Sigmoid colon (tissue), 7 donors: ENCODE measurements at regions of chr22 and their contacts with region 1.

Region 1: GRCh38 chr22:27107824-27108223 is 450.4 kb downstream of the MIAT start:
- DNase-seq: peak; percentile 88
- H3K4me3 ChIP-seq: no peak overlapping the region
- H3K27ac ChIP-seq: peak overlapping the region; percentile 74 to 84 (median 78)
- H3K4me1 ChIP-seq: peaks cover 0 to 67% (median 54%) of the 10 kb centered on the region in 4 donors
- H3K27me3 ChIP-seq: no peaks in the 10 kb centered on the region
- CTCF ChIP-seq: no peak
- EP300 ChIP-seq: no peak
- POLR2A ChIP-seq: no peak

Region 2: GRCh38 chr22:26763633-26764361 is 344.0 kb before region 1 on chr22:
- intact Hi-C with region 1: no loop called
- DNase-seq: no peak
- H3K4me3 ChIP-seq: no peak overlapping the region
- H3K27ac ChIP-seq: peak overlapping the region in 1 of 4 donors; percentile 19
- H3K4me1 ChIP-seq: peaks cover 0 to 8% (median 3%) of the 10 kb centered on the region in 4 donors
- H3K27me3 ChIP-seq: no peaks in the 10 kb centered on the region
- CTCF ChIP-seq: no peak
- EP300 ChIP-seq: no peak
- POLR2A ChIP-seq: no peak

Region 3: DNA sequence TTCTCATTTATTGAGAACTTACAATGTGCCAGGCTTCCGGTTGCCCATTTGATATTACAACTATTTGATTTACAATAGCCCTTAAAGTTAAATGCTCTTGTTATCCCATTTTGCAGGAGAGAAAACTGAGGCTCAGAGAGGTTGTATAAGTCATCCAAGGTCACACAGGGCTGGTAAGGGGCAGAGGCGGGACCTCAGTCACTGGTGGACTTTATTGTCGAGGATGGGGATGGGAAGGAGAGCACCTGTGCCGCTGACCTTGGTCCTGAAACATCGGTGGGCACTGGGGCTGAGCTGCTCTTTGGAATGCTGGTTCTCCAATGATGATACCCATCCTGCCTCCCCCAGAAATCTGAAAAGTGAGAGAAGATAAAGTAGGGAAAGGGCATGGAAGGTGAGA is 185.0 kb before region 1 on chr22:
- intact Hi-C with region 1: no loop called
- DNase-seq: no peak
- H3K4me3 ChIP-seq: no peak overlapping the region
- H3K27ac ChIP-seq: no peak overlapping the region
- H3K4me1 ChIP-seq: no peaks in the 10 kb centered on the region
- H3K27me3 ChIP-seq: no peaks in the 10 kb centered on the region
- CTCF ChIP-seq: no peak
- EP300 ChIP-seq: no peak
- POLR2A ChIP-seq: no peak

Region 4: GRCh38 chr22:26981541-26981940 is 126.3 kb before region 1 on chr22:
- intact Hi-C with region 1: loop called (anchors 5 kb)
- DNase-seq: peak; percentile 92
- H3K4me3 ChIP-seq: no peak overlapping the region
- H3K27ac ChIP-seq: peak overlapping the region; percentile 41 to 82 (median 76)
- H3K4me1 ChIP-seq: peaks cover 0 to 38% (median 25%) of the 10 kb centered on the region in 4 donors
- H3K27me3 ChIP-seq: no peaks in the 10 kb centered on the region
- CTCF ChIP-seq: no peak
- EP300 ChIP-seq: peak; percentile 37 to 88 (median 62)
- POLR2A ChIP-seq: no peak

Region 5: GRCh38 chr22:26995235-26995634 is 112.6 kb before region 1 on chr22:
- intact Hi-C with region 1: loop called (anchors 2 kb)
- DNase-seq: peak; percentile 84
- H3K4me3 ChIP-seq: no peak overlapping the region
- H3K27ac ChIP-seq: peak overlapping the region in 2 of 4 donors; percentile 8 to 26
- H3K4me1 ChIP-seq: peaks cover 0 to 31% (median 23%) of the 10 kb centered on the region in 4 donors
- H3K27me3 ChIP-seq: no peaks in the 10 kb centered on the region
- CTCF ChIP-seq: no peak
- EP300 ChIP-seq: no peak
- POLR2A ChIP-seq: no peak

Region 6: GRCh38 chr22:27195094-27195493 is 87.3 kb after region 1 on chr22:
- intact Hi-C with region 1: no loop called
- DNase-seq: peak; percentile 88
- H3K4me3 ChIP-seq: no peak overlapping the region
- H3K27ac ChIP-seq: peak overlapping the region; percentile 40 to 67 (median 64)
- H3K4me1 ChIP-seq: peaks cover 0 to 12% (median 9%) of the 10 kb centered on the region in 4 donors
- H3K27me3 ChIP-seq: no peaks in the 10 kb centered on the region
- CTCF ChIP-seq: no peak
- EP300 ChIP-seq: no peak
- POLR2A ChIP-seq: no peak

Region 7: DNA sequence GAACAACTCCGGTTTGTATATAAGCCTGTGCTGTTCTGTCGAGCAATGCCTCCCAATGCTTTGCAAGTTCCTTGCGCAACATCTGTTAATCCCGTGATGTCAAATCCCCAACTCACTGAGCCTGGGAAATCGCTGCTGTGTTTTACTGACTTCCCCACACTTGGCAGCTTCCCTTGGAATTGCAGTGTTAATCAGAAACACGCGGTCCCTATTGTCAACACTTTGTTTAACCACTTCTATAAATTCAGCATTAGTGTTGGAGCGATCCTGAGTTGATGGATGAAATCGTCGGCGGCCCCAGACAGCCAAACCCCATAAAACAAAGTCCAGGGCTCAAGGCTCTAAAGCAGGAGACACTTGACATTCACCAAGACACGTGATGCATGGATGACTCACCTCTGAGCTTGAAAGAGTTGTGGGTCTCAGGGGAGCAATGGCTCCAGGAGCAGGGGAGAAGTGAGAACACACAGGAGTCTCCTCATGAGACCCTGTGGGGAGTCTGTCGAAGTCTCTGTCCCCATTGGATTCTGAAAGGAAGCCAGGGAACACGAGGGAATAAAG is 104.9 kb after region 1 on chr22:
- intact Hi-C with region 1: loop called (anchors 2 kb)
- DNase-seq: peak; percentile 97
- H3K4me3 ChIP-seq: no peak overlapping the region
- H3K27ac ChIP-seq: peak overlapping the region; percentile 69 to 80 (median 72)
- H3K4me1 ChIP-seq: peaks cover 0 to 47% (median 38%) of the 10 kb centered on the region in 4 donors
- H3K27me3 ChIP-seq: no peaks in the 10 kb centered on the region
- CTCF ChIP-seq: no peak
- EP300 ChIP-seq: peak; percentile 76 to 92 (median 86)
- POLR2A ChIP-seq: no peak